ENCODE measurements at regions of chr4 and their contacts with region 1.

Region 1: DNA sequence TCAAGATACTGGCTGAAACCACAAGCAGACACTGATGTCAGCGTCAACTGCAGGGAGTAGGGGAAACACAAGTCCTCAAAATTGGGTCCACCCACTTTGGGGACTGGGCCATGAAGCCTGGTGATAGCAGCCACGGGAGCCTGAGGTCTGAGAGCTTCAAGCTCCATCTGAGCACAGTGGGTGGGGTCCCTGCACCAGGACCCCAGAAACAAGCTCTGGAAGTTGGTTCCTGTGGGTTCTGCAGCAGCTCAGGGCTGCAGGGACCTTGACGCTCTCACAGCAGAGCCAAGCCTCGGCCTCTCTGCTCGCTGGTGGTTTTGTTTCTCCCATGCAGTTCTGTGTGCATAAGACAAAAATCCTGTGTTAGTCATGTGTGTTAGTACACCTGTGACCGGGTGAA is 54.5 kb downstream of the CPLX1 start:
- DNase-seq: no peak
- H3K4me3 ChIP-seq: no peak overlapping the region
- H3K4me3 Mint-ChIP-seq: no peak overlapping the region
- H3K27ac ChIP-seq: no peak overlapping the region
- H3K27ac Mint-ChIP-seq: peak overlapping the region in 3 of 8 donors; percentile 12 to 58 (median 56)
- H3K4me1 ChIP-seq: peaks cover 21% of the 10 kb centered on the region
- H3K4me1 Mint-ChIP-seq: peaks cover 36 to 64% (median 49%) of the 10 kb centered on the region in 3 donors
- H3K27me3 ChIP-seq: no peaks in the 10 kb centered on the region
- H3K27me3 Mint-ChIP-seq: no peaks in the 10 kb centered on the region

Region 2: DNA sequence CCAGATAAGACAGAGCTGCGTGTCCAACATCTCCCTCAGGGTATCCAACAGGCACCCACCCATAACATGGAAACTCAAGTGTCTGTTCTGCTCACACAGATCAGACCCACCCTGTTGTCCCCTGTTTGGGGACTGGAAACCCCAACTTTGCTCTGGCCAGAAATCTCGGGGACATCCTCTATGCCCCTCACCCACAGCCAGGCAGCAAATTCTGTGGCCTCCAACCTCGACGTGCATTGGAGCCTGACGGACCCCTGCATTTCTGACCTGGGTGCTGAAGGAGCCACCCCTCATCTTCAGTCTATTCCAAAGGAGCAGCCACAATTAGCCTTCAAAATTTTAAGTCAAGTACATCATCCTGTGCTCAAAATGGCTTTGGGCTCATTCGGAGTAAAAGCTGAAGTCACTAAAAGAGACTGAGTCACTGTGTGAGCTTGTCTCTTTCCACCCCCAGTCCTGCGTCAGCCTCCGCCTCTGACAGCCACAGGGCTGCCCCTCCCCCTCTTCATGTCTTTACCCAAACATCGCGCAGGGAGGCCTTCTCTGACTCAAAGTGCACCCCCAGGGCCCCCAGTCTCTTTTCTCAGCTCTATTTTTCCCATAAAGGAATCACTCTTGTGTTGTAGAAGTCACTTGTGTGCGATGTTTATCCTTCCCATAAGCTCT is 170.5 kb before region 1 on chr4:
- CTCF ChIA-PET with region 1: no interaction called
- POLR2A ChIA-PET with region 1: no interaction called
- DNase-seq: no peak
- H3K4me3 ChIP-seq: no peak overlapping the region
- H3K4me3 Mint-ChIP-seq: no peak overlapping the region
- H3K27ac ChIP-seq: no peak overlapping the region
- H3K27ac Mint-ChIP-seq: no peak overlapping the region
- H3K4me1 ChIP-seq: no peaks in the 10 kb centered on the region
- H3K4me1 Mint-ChIP-seq: peaks cover 5 to 10% (median 7%) of the 10 kb centered on the region in 3 donors
- H3K27me3 ChIP-seq: no peaks in the 10 kb centered on the region
- H3K27me3 Mint-ChIP-seq: peaks cover 15 to 46% of the 10 kb centered on the region in 2 donors

Region 3: DNA sequence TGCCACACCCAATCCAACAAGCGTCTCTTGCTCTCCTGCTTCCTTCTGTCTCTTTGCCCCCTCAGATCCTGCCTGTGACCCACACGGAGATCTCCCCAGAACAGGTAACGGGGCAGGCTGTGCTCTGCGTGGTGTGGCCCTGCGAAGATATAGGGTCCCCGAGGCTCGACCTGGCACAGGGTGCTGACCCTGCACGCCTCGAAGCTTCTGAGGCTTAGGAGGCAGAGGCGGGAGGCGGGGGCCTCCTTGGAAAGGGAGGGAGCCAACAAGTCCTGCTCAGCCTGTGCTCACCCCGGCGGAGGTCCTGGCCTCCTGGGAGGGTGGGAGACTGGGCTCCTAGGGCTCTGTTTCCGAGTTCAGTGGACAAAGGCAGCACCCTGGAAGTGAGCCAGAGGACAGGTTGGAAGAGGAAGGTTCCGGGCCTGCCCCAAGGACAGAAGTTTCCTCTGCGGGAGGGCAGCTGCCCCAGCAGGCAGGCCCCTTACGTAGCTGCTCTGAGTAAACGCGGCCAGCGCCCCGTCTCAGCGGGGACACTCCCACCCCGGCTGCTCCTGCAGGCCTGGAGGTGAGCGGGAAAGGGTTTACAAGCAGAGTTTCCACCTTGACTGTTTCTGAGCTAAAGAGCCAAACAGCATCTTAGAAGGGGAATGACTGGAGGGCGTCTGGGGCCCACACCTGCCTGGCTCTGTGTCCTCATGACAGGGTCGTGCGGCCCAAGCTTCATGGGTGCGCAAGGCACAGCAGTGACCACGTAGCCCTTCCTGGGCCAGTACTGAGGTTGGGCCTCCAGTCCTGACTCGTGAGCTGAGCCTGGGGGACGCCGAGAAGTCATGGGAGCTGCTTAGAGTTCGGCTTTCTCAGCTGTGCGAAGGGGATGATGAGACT is 176.8 kb after region 1 on chr4:
- CTCF ChIA-PET with region 1: no interaction called
- POLR2A ChIA-PET with region 1: interaction called, 10 read pairs
- DNase-seq: peak in 1 of 5 donors; percentile 35
- H3K4me3 ChIP-seq: no peak overlapping the region
- H3K4me3 Mint-ChIP-seq: no peak overlapping the region
- H3K27ac ChIP-seq: no peak overlapping the region
- H3K27ac Mint-ChIP-seq: peak overlapping the region in 1 of 8 donors; percentile 23
- H3K4me1 ChIP-seq: no peaks in the 10 kb centered on the region
- H3K4me1 Mint-ChIP-seq: peaks cover 0 to 3% (median 0%) of the 10 kb centered on the region in 3 donors
- H3K27me3 ChIP-seq: no peaks in the 10 kb centered on the region
- H3K27me3 Mint-ChIP-seq: no peaks in the 10 kb centered on the region